CD4-positive, alpha-beta T cell (primary cell): ENCODE measurements at regions of chr9 and their contacts with region 1.

Region 1: DNA sequence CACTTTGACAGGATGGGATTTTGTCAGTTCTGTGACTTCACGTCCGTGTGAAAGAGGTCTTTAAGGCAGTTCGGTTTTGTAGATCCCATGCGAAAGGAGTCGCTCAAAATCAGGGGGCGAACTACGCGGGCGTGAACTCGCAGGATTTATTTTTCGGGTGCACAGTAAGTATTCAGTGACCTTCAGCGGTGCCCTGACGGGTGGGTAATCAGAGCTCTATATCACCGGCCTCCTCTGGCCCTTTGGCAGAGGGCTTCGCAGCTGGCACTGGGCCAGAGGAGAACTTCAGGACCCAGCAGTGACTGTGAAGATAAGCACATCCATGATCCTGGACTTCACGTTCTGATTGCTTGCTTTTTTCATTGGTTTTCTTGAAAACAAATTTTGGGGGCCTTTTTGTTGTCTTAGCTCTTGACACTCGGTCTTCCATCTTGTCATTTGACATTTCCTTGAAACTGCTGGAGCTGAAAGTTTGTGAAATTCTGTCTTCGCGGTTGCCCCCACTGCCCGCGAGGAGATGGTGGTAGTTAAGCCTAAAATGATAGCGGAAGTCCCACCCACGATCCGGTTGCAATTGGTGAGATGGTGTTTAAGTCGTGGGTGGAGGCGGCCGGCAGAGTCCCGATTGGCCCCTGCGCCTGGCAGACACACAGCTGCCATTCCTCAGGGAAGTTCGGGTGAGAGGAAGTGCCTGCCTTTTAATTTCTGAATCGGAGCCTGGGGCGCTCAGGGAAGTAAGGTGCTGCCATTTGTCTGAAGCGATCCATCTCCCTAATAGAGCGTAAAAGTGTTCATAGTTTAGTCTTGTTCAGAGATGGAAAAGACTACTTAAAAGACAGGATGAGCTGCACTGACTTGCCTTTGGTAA is at the start of gene FAM120AOS:
- DNase-seq: peak; percentile 65 to 93 (median 76)
- ATAC-seq: peak; percentile 71
- H3K4me3 ChIP-seq: peak within 1 kb of the TSS; percentile 90
- H3K4me3 Mint-ChIP-seq: peak within 1 kb of the TSS; percentile 98
- H3K27ac ChIP-seq: peak within 1 kb of the TSS; percentile 67 to 81
- H3K27ac Mint-ChIP-seq: peak within 1 kb of the TSS; percentile 94
- H3K4me1 ChIP-seq: peaks cover 29% of the 10 kb centered on the region
- H3K4me1 Mint-ChIP-seq: peaks cover 64% of the 10 kb centered on the region
- H3K27me3 ChIP-seq: no peaks in the 10 kb centered on the region
- H3K27me3 Mint-ChIP-seq: no peaks in the 10 kb centered on the region
- CTCF ChIP-seq: no peak
- total RNA-seq, gene FAM120AOS: 45.6 to 50.3 TPM

Region 2: GRCh38 chr9:92293452-92294296 is 1159.6 kb before region 1 on chr9 and contains the start of gene IARS1:
- CTCF ChIA-PET with region 1: no interaction called
- POLR2A ChIA-PET with region 1: no interaction called
- intact Hi-C with region 1: loop called in 1 of 2 experiments (anchors 10 kb)
- DNase-seq: peak; percentile 97 to 100 (median 99)
- ATAC-seq: peak; percentile 93
- H3K4me3 ChIP-seq: peak within 1 kb of the TSS; percentile 70
- H3K4me3 Mint-ChIP-seq: peak within 1 kb of the TSS; percentile 98
- H3K27ac ChIP-seq: peak within 1 kb of the TSS; percentile 73 to 74
- H3K27ac Mint-ChIP-seq: peak within 1 kb of the TSS; percentile 97
- H3K4me1 ChIP-seq: peaks cover 25% of the 10 kb centered on the region
- H3K4me1 Mint-ChIP-seq: peaks cover 69% of the 10 kb centered on the region
- H3K27me3 ChIP-seq: no peaks in the 10 kb centered on the region
- H3K27me3 Mint-ChIP-seq: no peaks in the 10 kb centered on the region
- CTCF ChIP-seq: no peak
- total RNA-seq, gene IARS1: 49.8 to 56.8 TPM

Region 3: DNA sequence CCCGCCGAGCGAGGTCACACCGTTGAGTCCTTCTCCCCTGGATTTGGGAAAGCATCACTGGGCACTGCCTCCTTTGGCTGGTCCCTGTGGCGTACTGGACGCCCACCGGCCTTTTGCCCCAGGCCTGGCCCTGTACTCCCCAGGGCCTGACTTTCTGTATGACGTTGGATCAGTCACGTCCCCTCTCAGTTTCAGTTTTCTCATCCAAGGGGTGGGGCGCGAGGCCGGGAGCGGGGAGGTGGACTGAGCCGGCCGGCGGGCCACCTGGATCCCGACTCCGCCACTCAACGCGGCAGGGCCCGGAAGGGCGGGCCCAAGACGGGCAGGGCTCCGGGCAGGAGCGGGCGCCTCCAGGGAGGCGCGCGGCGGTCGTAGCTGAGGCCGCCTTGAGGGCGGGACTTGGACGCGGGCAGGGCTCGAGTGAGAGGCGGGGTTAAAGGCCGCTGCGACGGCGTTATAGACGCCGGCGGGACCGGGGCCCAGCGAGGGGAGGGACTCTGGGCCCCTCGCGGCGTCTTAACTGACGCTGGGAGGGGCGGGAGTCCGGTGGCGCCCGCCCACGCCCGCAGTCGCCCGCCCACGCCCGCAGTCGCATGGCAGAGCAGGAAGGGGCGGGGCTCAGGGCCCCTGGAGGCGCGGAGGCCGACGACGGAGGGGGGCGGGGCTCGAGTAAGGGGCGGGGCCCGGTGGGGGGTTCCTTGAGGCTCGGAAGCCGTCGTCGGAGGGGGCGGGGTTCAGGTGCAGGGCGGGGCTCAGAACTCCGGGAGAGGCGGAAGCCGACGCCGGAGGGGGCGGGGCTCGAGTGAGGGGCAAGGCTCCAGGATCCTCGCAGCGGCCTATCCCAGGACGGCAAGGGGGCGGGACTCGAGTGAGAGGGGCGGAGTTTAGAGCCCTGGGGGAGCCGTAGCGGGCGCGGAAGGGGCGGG is 357.8 kb before region 1 on chr9:
- CTCF ChIA-PET with region 1: no interaction called
- POLR2A ChIA-PET with region 1: no interaction called
- intact Hi-C with region 1: loop called in 1 of 2 experiments (anchors 2 kb)
- DNase-seq: peak; percentile 100
- ATAC-seq: peak; percentile 81
- H3K4me3 ChIP-seq: peak overlapping the region; percentile 62
- H3K4me3 Mint-ChIP-seq: peak overlapping the region; percentile 95
- H3K27ac ChIP-seq: peak overlapping the region; percentile 94 to 95
- H3K27ac Mint-ChIP-seq: peak overlapping the region; percentile 99
- H3K4me1 ChIP-seq: peaks cover 75% of the 10 kb centered on the region
- H3K4me1 Mint-ChIP-seq: peaks cover 78% of the 10 kb centered on the region
- H3K27me3 ChIP-seq: no peaks in the 10 kb centered on the region
- H3K27me3 Mint-ChIP-seq: no peaks in the 10 kb centered on the region
- CTCF ChIP-seq: no peak

Region 4: GRCh38 chr9:93464395-93464794 is 11.1 kb after region 1 on chr9:
- CTCF ChIA-PET with region 1: interaction called, 7 read pairs
- POLR2A ChIA-PET with region 1: interaction called, 16 read pairs
- intact Hi-C with region 1: no loop called
- DNase-seq: peak in 3 of 14 experiments; percentile 14 to 27 (median 25)
- ATAC-seq: no peak
- H3K4me3 ChIP-seq: no peak overlapping the region
- H3K4me3 Mint-ChIP-seq: peak overlapping the region; percentile 14
- H3K27ac ChIP-seq: no peak overlapping the region
- H3K27ac Mint-ChIP-seq: peak overlapping the region; percentile 21
- H3K4me1 ChIP-seq: peaks cover 54% of the 10 kb centered on the region
- H3K4me1 Mint-ChIP-seq: peaks cover 89% of the 10 kb centered on the region
- H3K27me3 ChIP-seq: no peaks in the 10 kb centered on the region
- H3K27me3 Mint-ChIP-seq: no peaks in the 10 kb centered on the region
- CTCF ChIP-seq: no peak

Region 5: DNA sequence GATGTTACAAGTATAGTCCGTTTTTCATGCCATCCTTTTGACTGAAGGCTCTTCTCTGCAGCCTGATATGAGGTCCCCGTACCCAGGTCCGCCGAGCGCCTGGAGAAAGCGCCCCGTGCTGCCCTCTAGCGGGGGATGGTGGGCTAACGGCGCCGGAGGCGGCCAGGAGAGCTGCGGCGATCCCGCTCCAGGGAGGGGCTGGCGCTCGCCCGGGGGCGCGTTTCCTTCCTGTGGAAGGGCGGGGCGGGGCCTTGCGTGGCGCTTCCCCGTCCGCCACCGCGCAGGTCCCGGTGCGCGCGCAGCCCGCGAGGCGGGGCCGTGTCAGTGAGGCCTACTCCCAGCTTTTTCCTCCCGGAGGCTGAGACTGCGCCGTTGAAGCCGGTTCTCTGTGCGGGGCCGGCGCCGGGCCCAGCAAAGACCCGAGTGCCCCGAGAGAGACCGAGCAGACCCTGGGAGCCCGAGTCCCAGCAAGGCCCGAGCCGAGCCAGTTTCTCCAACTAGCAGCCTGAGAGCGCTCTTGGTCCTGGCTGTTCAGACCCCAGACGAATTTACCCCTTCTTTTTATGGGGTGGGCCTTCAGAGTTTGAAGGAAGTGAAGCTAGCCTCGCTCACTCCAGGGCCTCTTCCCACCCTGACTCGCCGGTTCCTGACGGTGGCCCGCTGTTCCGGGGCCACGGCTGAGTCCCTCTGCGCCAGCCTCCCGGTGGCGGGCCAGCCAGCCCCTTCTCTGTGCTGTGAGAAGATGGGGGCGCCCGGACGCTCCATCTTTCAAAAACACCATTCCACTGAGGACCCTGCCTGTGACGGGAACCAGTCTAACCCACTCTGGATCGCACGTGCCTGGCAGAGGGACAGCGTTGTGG is 113.4 kb after region 1 on chr9:
- CTCF ChIA-PET with region 1: interaction called, 13 read pairs
- POLR2A ChIA-PET with region 1: interaction called, 31 read pairs
- intact Hi-C with region 1: loop called (anchors 2 kb)
- DNase-seq: peak; percentile 95 to 99 (median 99)
- ATAC-seq: peak; percentile 97
- H3K4me3 ChIP-seq: peak overlapping the region; percentile 70
- H3K4me3 Mint-ChIP-seq: peak overlapping the region; percentile 88
- H3K27ac ChIP-seq: peak overlapping the region; percentile 89 to 92
- H3K27ac Mint-ChIP-seq: peak overlapping the region; percentile 90
- H3K4me1 ChIP-seq: peaks cover 19% of the 10 kb centered on the region
- H3K4me1 Mint-ChIP-seq: peaks cover 10% of the 10 kb centered on the region
- H3K27me3 ChIP-seq: no peaks in the 10 kb centered on the region
- H3K27me3 Mint-ChIP-seq: no peaks in the 10 kb centered on the region
- CTCF ChIP-seq: peak; percentile 91